PC-3 (cell line): ENCODE measurements at regions of chr15 and their contacts with region 1.

Region 1: DNA sequence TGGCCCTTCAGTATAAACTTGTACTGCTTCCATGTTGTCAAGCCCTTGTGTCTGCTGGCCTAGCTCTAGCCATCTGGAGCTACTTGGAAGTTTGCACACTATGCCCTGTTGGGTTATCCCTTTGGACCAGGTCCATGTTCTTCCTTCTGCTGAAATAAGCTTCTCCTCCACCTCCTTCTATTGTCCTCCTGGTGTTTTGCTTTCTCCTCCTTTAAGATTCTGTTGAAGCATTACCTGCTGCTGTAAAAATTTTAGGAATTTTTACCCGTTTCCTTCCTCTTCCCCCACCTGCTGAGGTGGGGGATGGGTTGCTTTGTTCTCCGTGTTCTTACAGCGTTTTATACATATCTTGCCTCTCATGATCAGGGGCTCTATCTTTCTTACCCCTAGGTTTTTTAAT is 51.7 kb downstream of the SH3GL3 start:
- DNase-seq: no peak
- ATAC-seq: no peak
- H3K4me3 ChIP-seq: no peak overlapping the region
- H3K27ac ChIP-seq: no peak overlapping the region
- H3K4me1 ChIP-seq: peaks cover 6% of the 10 kb centered on the region
- H3K27me3 ChIP-seq: no peaks in the 10 kb centered on the region
- CTCF ChIP-seq: no peak

Region 2: DNA sequence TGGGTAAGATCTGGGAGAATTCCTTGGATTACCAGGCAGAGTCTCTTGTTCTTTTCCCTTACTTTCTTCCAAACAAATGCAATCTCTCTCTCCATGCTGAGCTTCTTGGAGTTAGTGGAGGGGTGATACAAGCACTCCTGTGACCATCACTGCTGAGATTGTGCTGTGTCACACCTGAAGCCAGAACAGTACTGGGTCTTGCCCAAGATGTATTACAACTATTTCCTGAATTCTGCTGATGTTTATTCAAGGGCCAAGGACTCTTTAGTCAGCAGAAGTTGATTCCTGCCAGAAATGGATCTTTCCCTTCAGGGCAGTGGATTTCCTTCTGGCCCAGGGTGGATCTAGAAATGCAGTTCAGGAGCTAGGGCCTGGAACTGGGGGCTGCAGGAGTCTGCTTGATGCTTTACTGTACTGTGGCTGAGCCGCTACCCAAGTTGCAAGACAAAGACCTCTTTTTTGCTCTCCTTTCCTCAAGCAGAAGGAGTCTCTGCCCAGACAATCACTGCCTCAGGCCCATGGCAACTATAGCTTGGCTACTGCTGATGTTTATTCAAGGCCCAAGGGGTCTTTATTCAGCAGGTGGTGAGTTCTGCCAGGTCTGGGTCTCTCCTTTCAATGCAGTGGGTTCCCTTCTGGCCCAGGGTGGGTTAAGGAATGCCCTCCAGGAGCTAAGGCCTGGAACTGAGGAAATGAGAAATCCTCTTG is 47.2 kb after region 1 on chr15:
- CTCF ChIA-PET with region 1: no interaction called
- POLR2A ChIA-PET with region 1: interaction called, 10 read pairs
- intact Hi-C with region 1: no loop called
- DNase-seq: peak; percentile 43
- ATAC-seq: no peak; the same call in 1 of the 2 replicates
- H3K4me3 ChIP-seq: no peak overlapping the region
- H3K27ac ChIP-seq: 0 out of 2 replicates have a peak overlapping the region, but pooled peaks have one; percentile 18
- H3K4me1 ChIP-seq: peaks cover 13% of the 10 kb centered on the region
- H3K27me3 ChIP-seq: no peaks in the 10 kb centered on the region
- CTCF ChIP-seq: no peak